Activated CD8-positive, alpha-beta memory T cell treated with anti-CD3 and anti-CD28 coated beads, Interleukin-2, amount 10 ng/mL, durations not matched to agents 7 days and 5 days (primary cell): ENCODE measurements at regions of chr17 and their contacts with region 1.

Region 1: DNA sequence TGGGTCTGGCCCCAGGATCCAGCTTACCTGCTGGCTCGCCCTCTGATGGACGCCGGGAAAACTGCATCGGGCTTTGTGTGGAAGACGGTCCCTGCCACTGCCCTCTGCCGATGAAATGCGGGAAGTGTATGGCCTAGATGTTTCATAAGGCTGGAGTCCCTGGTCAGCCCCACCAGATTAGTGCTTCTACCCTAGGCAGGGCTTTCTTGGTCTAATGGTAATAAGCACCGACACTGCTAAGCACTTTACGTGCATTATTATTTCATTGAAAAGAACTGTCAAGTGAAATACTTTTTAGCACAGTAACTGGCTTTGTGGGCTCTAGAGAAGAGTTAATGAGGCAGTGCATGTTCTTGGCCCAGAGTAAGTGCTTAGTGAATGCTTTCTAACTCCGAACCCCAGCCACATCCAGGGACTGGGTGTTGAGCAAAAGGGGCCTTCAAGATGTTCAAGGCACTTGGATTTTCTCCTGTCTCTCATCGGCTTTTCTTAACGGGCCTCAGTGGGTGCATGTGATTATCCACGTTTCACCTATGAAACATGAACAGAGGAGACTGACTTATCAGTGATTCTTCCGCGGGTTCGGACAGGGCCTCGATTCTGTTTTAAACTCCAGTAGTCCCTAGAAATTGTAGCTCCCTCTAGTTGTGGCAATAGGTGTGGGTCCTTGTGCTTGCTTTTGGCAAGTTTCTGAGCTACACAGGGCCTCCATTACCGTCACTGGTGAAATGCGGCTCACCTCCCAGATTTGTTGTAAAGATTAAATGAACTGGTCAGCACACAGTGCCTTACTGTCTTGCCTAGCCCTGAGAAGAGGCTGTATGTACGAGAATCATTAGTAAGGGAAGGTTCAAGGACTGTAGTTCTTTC is 6.6 kb downstream of the TRAF4 start:
- DNase-seq: peak; percentile 93
- ATAC-seq: peak; percentile 88
- H3K4me3 Mint-ChIP-seq: no peak overlapping the region
- H3K27ac Mint-ChIP-seq: no peak overlapping the region
- H3K4me1 Mint-ChIP-seq: peaks cover 34% of the 10 kb centered on the region
- H3K27me3 Mint-ChIP-seq: no peaks in the 10 kb centered on the region

Region 2: DNA sequence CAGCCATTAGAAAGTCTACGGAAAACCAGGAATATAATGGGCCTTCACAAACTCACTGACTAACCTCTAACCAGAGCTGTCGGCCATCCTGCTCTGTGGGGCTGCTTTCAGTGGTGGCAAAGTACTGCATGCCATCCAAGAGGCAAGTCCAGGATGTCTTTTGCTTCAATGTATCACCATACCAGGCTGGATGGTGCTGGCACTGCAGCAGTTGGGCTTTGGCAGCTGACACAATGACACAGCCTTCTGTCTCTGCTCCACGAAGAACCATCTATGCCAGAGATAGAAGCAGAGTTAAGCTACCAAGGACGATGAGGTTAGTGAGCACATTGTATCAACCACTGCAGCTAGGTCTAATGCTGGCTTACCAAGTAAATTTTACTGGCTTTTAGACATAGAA is 126.7 kb before region 1 on chr17:
- CTCF ChIA-PET with region 1: no interaction called
- DNase-seq: no peak
- ATAC-seq: no peak
- H3K4me3 Mint-ChIP-seq: no peak overlapping the region
- H3K27ac Mint-ChIP-seq: no peak overlapping the region
- H3K4me1 Mint-ChIP-seq: no peaks in the 10 kb centered on the region
- H3K27me3 Mint-ChIP-seq: no peaks in the 10 kb centered on the region

Region 3: GRCh38 chr17:28684963-28685362 is 65.5 kb before region 1 on chr17:
- CTCF ChIA-PET with region 1: no interaction called
- DNase-seq: no peak
- ATAC-seq: no peak
- H3K4me3 Mint-ChIP-seq: no peak overlapping the region
- H3K27ac Mint-ChIP-seq: no peak overlapping the region
- H3K4me1 Mint-ChIP-seq: no peaks in the 10 kb centered on the region
- H3K27me3 Mint-ChIP-seq: no peaks in the 10 kb centered on the region

Region 4: DNA sequence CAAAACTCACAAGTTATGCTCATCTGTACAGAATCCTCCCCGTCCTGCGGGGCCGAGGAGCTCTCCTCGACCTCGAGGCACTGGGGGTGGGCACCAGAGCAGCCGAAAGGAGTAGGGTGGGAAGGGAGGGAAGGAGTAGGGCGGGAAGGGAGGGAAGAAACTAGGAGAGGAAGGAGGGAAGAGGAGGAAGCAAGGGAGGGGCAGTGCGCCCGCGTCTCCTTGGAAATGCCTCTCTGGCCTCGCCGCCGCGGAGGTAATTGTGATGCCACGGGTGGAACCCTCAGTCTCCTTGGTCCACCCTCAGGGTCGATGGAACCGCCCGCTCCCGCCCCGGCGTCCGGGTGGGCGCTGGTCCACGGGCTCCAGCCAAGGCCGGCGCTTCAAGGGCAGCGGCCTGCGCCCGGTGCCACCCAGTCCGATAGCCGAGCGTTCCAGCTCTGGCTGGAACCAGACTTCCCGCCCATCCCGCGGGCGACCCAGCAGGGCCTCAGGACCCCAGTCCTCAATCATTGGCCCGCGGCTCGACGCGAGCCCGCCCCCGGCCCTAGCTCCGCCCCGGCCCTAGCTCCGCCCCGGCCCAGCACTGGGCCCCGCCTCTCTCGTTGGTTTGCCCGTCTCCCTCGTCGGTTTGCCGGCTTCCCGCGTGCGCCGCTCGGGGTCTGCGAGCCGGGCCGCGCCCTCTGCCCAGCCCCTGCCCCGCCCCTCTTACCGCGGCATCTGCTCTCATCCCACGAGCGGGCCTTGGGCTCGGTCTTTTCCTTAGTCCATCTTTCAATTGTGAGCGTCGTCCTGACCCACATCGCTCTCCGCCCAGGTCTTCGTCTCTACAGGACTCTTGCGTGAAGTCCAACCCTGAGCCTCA is 39.3 kb before region 1 on chr17:
- CTCF ChIA-PET with region 1: interaction called, 16 read pairs
- DNase-seq: peak; percentile 92
- ATAC-seq: peak; percentile 93
- H3K4me3 Mint-ChIP-seq: peak overlapping the region; percentile 81
- H3K27ac Mint-ChIP-seq: peak overlapping the region; percentile 93
- H3K4me1 Mint-ChIP-seq: peaks cover 17% of the 10 kb centered on the region
- H3K27me3 Mint-ChIP-seq: peaks cover 19% of the 10 kb centered on the region

Region 5: DNA sequence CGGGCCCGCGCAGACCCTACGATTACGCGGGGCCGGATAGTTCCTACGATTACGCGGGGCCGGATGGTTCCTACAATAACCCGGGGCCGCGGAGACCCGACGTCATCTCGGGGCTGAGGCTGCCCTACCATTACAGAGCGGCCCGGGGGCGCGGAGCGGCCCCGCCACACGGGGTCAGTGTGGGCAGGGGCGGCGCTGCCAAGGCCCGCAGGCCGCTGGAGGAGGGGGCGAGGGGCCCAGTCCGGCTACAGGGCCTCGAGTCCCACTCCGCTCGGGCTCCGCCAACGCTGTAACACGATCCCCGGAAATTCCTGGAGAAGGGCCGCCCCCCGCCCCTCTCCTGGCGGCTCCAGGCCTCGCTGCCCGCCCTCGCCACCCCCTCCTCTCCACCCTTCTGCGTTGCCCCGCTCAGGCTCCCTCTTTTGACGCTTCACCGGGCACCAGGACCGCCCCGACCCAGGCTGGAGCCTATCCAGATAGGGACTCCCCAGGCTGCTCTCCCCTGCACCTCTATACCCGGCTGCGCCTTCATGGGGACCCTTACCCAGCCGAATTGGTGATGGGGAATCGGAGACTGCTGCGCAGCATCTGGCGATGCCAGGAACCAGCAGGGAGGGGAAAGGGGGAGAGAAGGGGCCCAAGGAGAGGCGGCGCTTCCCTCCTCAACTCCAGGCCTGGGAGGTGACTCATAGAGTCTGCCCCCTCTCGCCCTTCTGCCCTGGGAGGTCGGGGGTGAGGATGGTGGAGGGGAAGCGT is 32.7 kb before region 1 on chr17 and contains the start of gene RAB34:
- CTCF ChIA-PET with region 1: interaction called, 37 read pairs
- DNase-seq: no peak
- ATAC-seq: no peak
- H3K4me3 Mint-ChIP-seq: peak within 1 kb of the TSS; percentile 40
- H3K27ac Mint-ChIP-seq: peak within 1 kb of the TSS; percentile 24
- H3K4me1 Mint-ChIP-seq: peaks cover 29% of the 10 kb centered on the region
- H3K27me3 Mint-ChIP-seq: peaks cover 36% of the 10 kb centered on the region
- total RNA-seq, gene RAB34: 5.6 to 8.3 TPM